Spleen (tissue), 13 donors: ENCODE measurements at regions of chr13 and their contacts with region 1.

Region 1: DNA sequence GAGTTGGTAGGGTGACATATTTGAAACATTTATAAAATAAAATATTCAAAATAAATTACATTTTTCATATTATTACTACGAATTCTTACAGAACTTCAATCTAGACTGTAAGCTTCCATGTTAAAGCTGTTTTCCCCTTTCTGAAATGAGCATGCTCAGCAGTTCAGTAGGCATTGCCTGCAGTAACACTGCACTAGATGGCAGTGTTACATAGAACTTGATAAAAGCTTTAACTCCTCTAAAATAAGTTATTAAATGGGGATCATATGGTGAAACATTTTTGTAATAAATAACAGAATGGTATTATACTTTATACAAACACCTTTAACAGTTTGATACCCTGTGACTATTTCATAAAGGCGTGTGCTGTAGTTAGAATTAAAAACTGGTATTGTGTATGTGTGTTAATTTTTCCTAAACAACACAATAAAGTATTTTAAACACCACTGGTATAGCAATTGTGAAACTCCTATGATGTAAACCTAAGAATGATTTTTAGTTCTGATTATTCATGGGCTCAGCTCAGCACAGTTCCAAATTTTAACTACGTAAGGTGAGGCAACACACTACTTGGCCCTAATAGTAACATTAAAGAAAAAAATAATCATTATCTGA is 11.6 kb upstream of the GPR18 start:
- DNase-seq: no peak
- H3K4me3 ChIP-seq: no peak overlapping the region
- H3K27ac ChIP-seq: peak overlapping the region in 7 of 8 donors; percentile 63 to 89 (median 79)
- H3K4me1 ChIP-seq: peaks cover 0 to 77% (median 54%) of the 10 kb centered on the region in 6 donors
- H3K27me3 ChIP-seq: no peaks in the 10 kb centered on the region
- CTCF ChIP-seq: peak; percentile 65 to 91 (median 82)
- POLR2A ChIP-seq: no peak

Region 2: DNA sequence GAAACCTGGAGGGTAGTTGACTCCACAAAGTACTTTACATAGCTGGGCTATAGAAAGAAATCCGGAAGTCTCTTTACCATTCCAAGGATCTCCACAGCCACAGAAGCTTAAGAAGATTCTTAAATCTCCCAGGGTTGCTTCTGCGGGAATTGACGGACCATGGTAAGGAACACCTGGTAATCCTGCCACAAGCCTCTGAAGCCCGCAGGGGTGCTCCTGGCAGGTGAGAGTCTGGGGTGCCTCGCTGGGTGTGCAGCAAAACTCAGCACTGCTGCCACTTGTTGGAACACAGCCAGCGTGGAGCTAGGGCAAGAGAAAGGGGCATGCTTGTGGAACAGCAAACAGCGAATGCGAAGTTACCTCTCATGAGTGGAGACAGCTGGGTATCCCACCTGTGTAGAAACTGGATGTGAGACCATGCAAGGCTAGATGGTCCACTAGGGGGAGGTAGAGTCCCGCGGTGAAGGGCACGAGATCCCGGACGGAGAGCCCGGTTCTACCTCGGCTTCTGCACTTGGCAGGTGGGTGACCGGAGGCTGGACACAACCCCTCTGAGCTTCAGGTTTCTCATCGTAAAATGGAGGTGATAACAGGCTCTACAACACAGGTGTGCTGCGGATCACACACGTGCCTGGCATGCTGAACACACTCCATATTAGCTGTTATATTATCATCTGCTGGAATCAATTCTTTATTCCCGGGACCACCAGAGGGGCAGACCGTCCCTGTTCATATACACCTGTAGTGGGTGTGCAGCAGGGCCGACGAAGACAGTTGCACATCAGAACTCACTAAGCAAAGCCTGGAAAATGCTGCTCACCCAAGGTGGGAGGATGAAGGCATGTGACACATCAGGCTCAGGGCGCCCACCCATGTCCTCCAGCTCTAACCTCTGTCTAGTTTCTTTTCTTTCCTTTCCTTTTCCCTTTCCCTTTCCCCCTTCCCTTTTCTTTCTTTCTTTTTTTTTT is 93.1 kb before region 1 on chr13:
- intact Hi-C with region 1: loop called (anchors 5 kb)
- DNase-seq: peak; percentile 90
- H3K4me3 ChIP-seq: peak overlapping the region in 1 of 8 donors; percentile 36
- H3K27ac ChIP-seq: no peak overlapping the region
- H3K4me1 ChIP-seq: peaks cover 7 to 38% (median 26%) of the 10 kb centered on the region in 6 donors
- H3K27me3 ChIP-seq: peaks cover 0 to 38% (median 4%) of the 10 kb centered on the region in 7 donors
- CTCF ChIP-seq: peak; percentile 67 to 93 (median 89)
- POLR2A ChIP-seq: no peak

Region 3: GRCh38 chr13:99199541-99200431 is 69.9 kb before region 1 on chr13:
- intact Hi-C with region 1: loop called (anchors 5 kb)
- DNase-seq: no peak
- H3K4me3 ChIP-seq: peak overlapping the region; percentile 83 to 97 (median 91)
- H3K27ac ChIP-seq: peak overlapping the region; percentile 93 to 100 (median 98)
- H3K4me1 ChIP-seq: peaks cover 26 to 62% (median 43%) of the 10 kb centered on the region in 6 donors
- H3K27me3 ChIP-seq: no peaks in the 10 kb centered on the region
- CTCF ChIP-seq: no peak
- POLR2A ChIP-seq: no peak

Region 4: DNA sequence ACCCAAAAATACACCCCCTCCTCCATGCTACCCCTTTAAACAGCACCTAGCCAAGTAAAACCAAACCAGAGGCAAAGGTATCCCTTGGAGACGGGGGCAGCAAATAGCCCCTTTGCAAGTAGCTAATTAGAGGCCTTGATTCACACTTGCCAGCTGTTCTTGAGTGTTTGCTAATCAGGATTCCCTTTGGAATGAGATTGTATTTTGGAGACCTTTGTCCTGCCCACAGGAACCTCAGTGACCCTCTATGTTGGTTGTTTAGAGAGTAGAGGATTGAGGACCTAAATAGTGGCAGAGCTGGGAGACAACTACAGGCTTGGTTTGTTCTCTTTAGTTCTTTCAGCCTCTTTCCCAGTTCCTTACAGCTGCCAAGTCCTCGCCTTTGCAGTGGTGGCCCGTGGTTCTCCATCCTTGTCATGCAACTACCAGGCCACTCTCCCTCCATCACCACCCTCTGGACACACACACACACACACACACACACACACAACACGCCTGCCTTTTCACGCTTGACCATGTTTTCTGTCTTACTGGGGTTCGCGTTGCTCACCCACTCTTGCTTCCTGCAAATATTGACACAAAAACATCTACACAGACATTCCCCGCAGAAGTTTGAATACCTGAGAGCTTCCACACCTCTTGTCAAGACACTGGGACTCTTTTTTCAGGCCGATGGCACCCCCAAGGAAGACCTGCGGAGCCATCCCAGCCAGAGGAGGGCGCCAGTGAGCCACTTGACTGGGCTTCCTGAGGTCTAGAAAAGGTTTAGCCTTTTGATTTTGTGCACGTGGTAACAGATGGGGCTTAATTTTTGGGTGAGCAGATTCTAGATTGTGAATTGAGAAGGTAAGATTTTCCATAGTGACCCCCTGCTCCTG is 117.4 kb after region 1 on chr13:
- intact Hi-C with region 1: loop called (anchors 10 kb)
- DNase-seq: peak; percentile 94
- H3K4me3 ChIP-seq: no peak overlapping the region
- H3K27ac ChIP-seq: peak overlapping the region in 7 of 8 donors; percentile 4 to 85 (median 36)
- H3K4me1 ChIP-seq: peaks cover 8 to 68% (median 42%) of the 10 kb centered on the region in 6 donors
- H3K27me3 ChIP-seq: no peaks in the 10 kb centered on the region
- CTCF ChIP-seq: peak; percentile 71 to 91 (median 85)
- POLR2A ChIP-seq: no peak

Region 5: GRCh38 chr13:99436686-99437416 is 167.1 kb after region 1 on chr13:
- intact Hi-C with region 1: loop called (anchors 5 kb)
- DNase-seq: peak; percentile 98
- H3K4me3 ChIP-seq: peak overlapping the region in 4 of 8 donors; percentile 1 to 43 (median 5)
- H3K27ac ChIP-seq: peak overlapping the region in 3 of 8 donors; percentile 82 to 87 (median 84)
- H3K4me1 ChIP-seq: peaks cover 33 to 68% (median 51%) of the 10 kb centered on the region in 6 donors
- H3K27me3 ChIP-seq: peaks cover 0 to 8% (median 0%) of the 10 kb centered on the region in 7 donors
- CTCF ChIP-seq: peak; percentile 96 to 100 (median 100)
- POLR2A ChIP-seq: no peak

Region 6: GRCh38 chr13:99484473-99484872 is 214.7 kb after region 1 on chr13:
- intact Hi-C with region 1: no loop called
- DNase-seq: no peak
- H3K4me3 ChIP-seq: peak overlapping the region in 1 of 8 donors; percentile 11
- H3K27ac ChIP-seq: peak overlapping the region in 7 of 8 donors; percentile 12 to 76 (median 68)
- H3K4me1 ChIP-seq: peaks cover 0 to 37% (median 0%) of the 10 kb centered on the region in 6 donors
- H3K27me3 ChIP-seq: no peaks in the 10 kb centered on the region
- CTCF ChIP-seq: no peak
- POLR2A ChIP-seq: no peak

Region 7: GRCh38 chr13:99501184-99501847 is 231.6 kb after region 1 on chr13 and contains the start of gene TM9SF2:
- intact Hi-C with region 1: loop called (anchors 10 kb)
- DNase-seq: peak; percentile 98
- H3K4me3 ChIP-seq: peak within 1 kb of the TSS; percentile 65 to 95 (median 87)
- H3K27ac ChIP-seq: peak within 1 kb of the TSS; percentile 78 to 98 (median 93)
- H3K4me1 ChIP-seq: peaks cover 49 to 90% (median 83%) of the 10 kb centered on the region in 6 donors
- H3K27me3 ChIP-seq: no peaks in the 10 kb centered on the region
- CTCF ChIP-seq: peak in 1 of 11 experiments; percentile 17
- POLR2A ChIP-seq: peak in 2 of 3 donors; percentile 30 to 61
- total RNA-seq, gene TM9SF2: 82.7 to 134 (median 103) TPM

Region 8: GRCh38 chr13:100650326-100650725 is 1380.6 kb after region 1 on chr13:
- intact Hi-C with region 1: no loop called
- DNase-seq: no peak
- H3K4me3 ChIP-seq: no peak overlapping the region
- H3K27ac ChIP-seq: no peak overlapping the region
- H3K4me1 ChIP-seq: no peaks in the 10 kb centered on the region
- H3K27me3 ChIP-seq: no peaks in the 10 kb centered on the region
- CTCF ChIP-seq: no peak
- POLR2A ChIP-seq: no peak